HEK293T (cell line): ENCODE measurements at regions of chr17 and their contacts with region 1.

Region 1: GRCh38 chr17:39653662-39654331 is 11.4 kb upstream of the TCAP start:
- DNase-seq: peak; percentile 76

Region 2: DNA sequence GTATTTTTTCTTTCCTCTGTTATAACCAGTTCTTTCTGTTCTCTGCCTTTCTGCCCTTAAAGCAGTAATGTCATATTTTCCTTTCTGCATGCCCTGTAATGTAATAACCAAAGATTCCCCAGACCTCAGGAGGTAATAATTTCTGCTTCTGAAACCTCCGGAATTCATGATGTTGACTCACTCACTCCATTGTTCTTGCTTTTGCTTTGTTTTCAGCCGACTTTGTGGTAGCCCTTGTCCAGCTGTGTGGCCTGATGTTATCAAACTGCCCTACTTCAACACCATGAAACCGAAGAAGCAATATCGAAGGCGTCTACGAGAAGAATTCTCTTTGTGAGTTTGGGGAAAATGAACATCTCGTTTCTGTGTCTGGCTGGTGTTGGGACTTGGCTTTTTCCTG is 136.6 kb before region 1 on chr17:
- CTCF ChIA-PET with region 1: no interaction called
- POLR2A ChIA-PET with region 1: no interaction called
- DNase-seq: no peak

Region 3: DNA sequence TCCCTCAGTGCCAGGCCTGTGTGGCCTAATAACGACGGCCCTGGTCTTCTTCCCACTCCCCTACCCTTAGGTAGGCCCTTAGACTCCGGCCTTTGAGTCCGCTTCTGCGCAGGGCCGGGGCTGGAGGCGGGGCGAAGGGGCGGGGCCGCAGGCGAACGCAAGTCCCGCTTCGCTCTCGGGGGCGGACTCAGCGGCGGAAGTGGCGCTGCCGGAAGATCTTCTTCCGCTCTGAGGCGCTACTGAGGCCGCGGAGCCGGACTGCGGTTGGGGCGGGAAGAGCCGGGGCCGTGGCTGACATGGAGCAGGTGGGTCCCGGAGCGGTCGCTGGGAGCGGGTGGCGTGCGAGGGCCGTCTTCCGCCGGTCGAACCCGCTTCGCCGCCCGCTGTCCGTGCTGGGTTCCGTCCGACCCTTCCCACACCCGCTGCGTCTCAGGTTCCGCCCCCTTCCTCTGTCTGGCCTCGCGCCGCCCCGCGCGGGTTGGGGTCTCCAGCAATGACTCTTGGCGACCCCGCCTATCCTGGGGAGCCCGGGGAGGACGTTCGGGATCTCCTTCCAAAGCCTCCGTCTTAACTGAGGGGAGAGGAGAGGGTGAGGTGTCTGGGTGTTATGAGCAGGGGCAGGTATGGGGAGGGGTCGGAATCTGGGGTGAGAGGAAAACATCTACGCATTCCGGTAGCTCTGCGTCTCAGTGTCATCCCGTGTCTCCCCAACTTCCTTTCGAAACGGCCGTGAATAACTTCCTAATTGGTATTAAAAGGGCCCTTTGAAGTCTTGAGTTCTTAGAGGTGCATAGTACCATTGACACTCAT is 16.7 kb before region 1 on chr17 and contains the start of gene STARD3:
- CTCF ChIA-PET with region 1: interaction called, 39 read pairs
- POLR2A ChIA-PET with region 1: interaction called, 11 read pairs
- DNase-seq: peak; percentile 84

Region 4: DNA sequence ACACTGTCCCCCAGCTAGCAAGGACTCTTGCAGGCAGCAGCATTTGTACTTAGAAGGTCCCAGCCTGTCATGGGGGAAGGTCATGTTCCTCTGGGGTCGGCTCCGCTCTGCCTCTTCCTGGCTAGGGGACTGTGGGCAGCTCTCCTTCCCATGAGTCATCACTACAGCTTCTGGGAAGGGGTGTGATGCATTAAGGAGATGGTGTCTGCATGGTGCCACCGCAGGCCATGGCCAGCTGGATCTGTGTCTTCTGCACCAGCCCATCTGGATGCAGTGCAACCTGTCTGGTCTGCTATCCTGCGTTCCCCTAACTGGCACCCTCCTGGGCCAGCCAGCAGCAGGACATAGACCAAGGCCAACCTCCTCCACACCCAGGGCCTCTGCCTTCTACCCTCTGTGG is 10.5 kb before region 1 on chr17:
- CTCF ChIA-PET with region 1: interaction called, 39 read pairs
- POLR2A ChIA-PET with region 1: interaction called, 11 read pairs
- DNase-seq: no peak

Region 5: DNA sequence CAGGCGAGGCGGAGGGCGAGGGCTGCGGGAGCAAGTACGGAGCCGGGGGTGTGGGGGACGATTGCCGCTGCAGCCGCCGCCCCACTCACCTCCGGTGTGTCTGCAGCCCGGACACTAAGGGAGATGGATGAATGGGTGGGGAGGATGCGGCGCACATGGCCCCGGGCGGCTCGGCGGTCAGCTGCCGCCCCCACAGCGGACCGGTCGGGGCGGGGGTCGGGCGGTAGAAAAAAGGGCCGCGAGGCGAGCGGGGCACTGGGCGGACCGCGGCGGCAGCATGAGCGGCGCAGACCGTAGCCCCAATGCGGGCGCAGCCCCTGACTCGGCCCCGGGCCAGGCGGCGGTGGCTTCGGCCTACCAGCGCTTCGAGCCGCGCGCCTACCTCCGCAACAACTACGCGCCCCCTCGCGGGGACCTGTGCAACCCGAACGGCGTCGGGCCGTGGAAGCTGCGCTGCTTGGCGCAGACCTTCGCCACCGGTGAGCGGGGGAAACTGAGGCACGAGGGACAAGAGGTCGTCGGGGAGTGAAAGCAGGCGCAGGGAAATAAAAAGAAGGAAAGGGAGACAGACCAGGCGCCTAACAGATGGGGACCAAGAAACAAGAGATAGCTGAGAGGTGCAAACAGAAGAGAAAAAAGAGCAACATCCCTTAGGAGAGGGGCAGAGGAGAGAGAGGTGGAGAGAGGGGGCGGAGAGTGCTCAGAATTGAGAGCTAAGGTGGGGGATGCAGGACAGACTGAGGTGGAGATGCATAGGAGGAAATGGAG is 14.6 kb after region 1 on chr17 and contains the start of gene PNMT:
- CTCF ChIA-PET with region 1: interaction called, 28 read pairs
- POLR2A ChIA-PET with region 1: interaction called, 5 read pairs
- DNase-seq: peak; percentile 68